Naive thymus-derived CD4-positive, alpha-beta T cell (primary cell): ENCODE measurements at regions of chr16 and their contacts with region 1.

Region 1: GRCh38 chr16:67841764-67842508 is at the start of gene THAP11:
- DNase-seq: peak; percentile 91 to 99 (median 96)
- ATAC-seq: peak; percentile 76
- H3K4me3 ChIP-seq: peak within 1 kb of the TSS; percentile 100
- H3K4me3 Mint-ChIP-seq: peak within 1 kb of the TSS; percentile 94 to 97 (median 96)
- H3K27ac ChIP-seq: peak within 1 kb of the TSS; percentile 99
- H3K27ac Mint-ChIP-seq: peak within 1 kb of the TSS; percentile 94 to 98 (median 97)
- H3K4me1 ChIP-seq: peaks cover 34 to 36% of the 10 kb centered on the region in 2 donors
- H3K4me1 Mint-ChIP-seq: peaks cover 18 to 41% (median 36%) of the 10 kb centered on the region in 7 donors
- H3K27me3 ChIP-seq: no peaks in the 10 kb centered on the region
- H3K27me3 Mint-ChIP-seq: no peaks in the 10 kb centered on the region
- total RNA-seq, gene THAP11: 29.0 to 62.7 (median 44.6) TPM

Region 2: GRCh38 chr16:67660564-67661028 is 181.3 kb before region 1 on chr16 and contains the start of gene PARD6A:
- CTCF ChIA-PET with region 1: no interaction called
- POLR2A ChIA-PET with region 1: interaction called, 3 read pairs
- intact Hi-C with region 1: loop called (anchors 1 to 10 kb)
- DNase-seq: peak; percentile 81 to 95 (median 93)
- ATAC-seq: peak; percentile 89
- H3K4me3 ChIP-seq: peak within 1 kb of the TSS; percentile 99
- H3K4me3 Mint-ChIP-seq: peak within 1 kb of the TSS; percentile 90 to 97 (median 94)
- H3K27ac ChIP-seq: peak within 1 kb of the TSS; percentile 97
- H3K27ac Mint-ChIP-seq: peak within 1 kb of the TSS; percentile 84 to 98 (median 97)
- H3K4me1 ChIP-seq: peaks cover 11 to 17% of the 10 kb centered on the region in 2 donors
- H3K4me1 Mint-ChIP-seq: peaks cover 15 to 40% (median 22%) of the 10 kb centered on the region in 7 donors
- H3K27me3 ChIP-seq: no peaks in the 10 kb centered on the region
- H3K27me3 Mint-ChIP-seq: no peaks in the 10 kb centered on the region
- total RNA-seq, gene PARD6A: 4.5 to 11.2 (median 4.7) TPM

Region 3: GRCh38 chr16:67865316-67865715 is 23.4 kb after region 1 on chr16:
- CTCF ChIA-PET with region 1: interaction called, 6 read pairs
- POLR2A ChIA-PET with region 1: interaction called, 5 read pairs
- intact Hi-C with region 1: loop called in 1 of 2 experiments (anchors 2 kb)
- DNase-seq: peak in 2 of 9 donors; percentile 18 to 19
- ATAC-seq: peak; percentile 64
- H3K4me3 ChIP-seq: no peak overlapping the region
- H3K4me3 Mint-ChIP-seq: no peak overlapping the region
- H3K27ac ChIP-seq: no peak overlapping the region
- H3K27ac Mint-ChIP-seq: peak overlapping the region in 1 of 9 donors; percentile 65
- H3K4me1 ChIP-seq: no peaks in the 10 kb centered on the region
- H3K4me1 Mint-ChIP-seq: peaks cover 4 to 16% (median 8%) of the 10 kb centered on the region in 7 donors
- H3K27me3 ChIP-seq: no peaks in the 10 kb centered on the region
- H3K27me3 Mint-ChIP-seq: no peaks in the 10 kb centered on the region

Region 4: DNA sequence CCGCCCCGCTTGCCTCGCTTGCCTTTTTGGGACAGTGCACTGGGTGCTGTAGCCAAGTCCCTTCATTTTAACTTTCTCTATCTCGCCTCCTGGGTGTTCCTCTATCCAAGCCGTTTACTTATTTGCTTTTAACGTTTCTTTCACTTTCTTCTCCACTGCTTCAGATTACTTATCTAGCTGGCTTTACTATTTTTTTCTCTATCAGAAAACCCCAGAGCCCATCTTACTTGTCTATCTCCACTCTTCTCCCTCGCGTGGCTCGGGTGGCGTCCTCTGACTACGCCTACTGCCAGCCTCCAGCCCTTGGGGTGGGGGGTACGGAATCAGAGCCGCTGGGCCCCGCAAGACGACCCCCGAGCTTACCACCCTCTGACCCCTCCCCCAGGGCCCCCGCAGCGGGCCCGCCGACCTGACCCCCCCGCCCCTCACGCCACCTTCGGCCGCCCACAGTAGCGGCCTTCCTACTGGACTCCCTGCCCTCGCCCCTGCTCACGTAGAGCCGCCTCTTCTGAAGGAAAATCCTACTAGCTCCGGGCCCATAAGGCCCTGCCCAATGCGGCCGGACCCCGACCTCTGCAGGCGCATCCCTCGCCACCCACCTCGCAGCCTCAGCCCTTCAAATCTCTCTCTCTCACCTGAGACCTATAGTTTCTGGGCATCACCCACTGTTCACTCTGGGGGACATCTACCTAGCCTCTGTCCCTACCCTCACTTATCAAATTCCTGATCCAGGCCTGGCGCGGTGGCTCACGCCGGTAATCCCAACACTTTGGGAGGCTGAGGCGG is 127.5 kb after region 1 on chr16:
- CTCF ChIA-PET with region 1: no interaction called
- POLR2A ChIA-PET with region 1: no interaction called
- intact Hi-C with region 1: no loop called
- DNase-seq: peak in 5 of 9 donors; percentile 15 to 44 (median 43)
- ATAC-seq: peak; percentile 21
- H3K4me3 ChIP-seq: peak overlapping the region; percentile 88
- H3K4me3 Mint-ChIP-seq: peak overlapping the region; percentile 86 to 100 (median 96)
- H3K27ac ChIP-seq: peak overlapping the region; percentile 81
- H3K27ac Mint-ChIP-seq: peak overlapping the region; percentile 77 to 93 (median 91)
- H3K4me1 ChIP-seq: peaks cover 10 to 14% of the 10 kb centered on the region in 2 donors
- H3K4me1 Mint-ChIP-seq: peaks cover 20 to 39% (median 29%) of the 10 kb centered on the region in 7 donors
- H3K27me3 ChIP-seq: no peaks in the 10 kb centered on the region
- H3K27me3 Mint-ChIP-seq: peaks cover 0 to 1% (median 0%) of the 10 kb centered on the region in 5 donors

Region 5: DNA sequence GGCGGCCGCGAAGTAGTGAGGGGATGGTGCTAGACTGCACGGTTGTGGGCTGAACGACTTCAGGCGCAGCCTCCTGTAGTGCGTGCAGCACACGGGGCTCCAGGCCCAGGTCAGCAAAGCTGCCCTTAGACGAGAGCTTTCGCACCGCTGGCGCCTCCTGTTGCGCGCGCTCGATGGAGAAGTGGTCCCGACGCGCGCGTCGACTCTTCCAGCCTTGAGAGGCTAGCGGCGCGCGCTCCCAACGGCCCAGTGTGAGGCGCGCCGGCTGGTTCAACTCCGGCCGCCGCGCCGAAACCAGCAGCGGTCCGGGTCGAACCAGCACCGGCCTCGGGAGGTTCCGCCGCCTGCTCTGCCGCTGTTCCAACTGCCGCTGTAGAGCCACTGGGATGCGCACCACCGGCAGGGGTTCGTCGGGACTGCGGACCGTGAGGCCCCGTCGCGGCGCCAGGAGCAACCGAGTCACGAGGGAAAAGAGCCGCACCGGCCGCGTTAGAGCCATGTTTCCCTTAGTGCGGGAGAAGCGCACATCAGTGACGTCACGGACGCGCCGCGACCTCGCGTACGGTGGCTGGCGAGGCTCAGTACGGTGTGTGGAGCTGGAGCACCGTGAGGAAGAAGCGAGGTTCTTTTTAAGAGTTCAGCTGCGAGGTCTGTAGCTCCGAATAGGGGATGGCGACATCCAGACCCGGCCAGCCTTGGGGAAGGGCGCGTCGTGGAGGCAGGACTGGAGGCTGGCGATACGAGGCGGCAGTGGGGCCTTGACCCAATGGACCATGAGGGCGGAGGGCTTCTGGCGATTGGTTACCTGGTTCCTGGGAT is 181.0 kb after region 1 on chr16 and contains the starts of genes DDX28 and DUS2:
- CTCF ChIA-PET with region 1: interaction called, 3 read pairs
- POLR2A ChIA-PET with region 1: interaction called, 5 read pairs
- intact Hi-C with region 1: loop called in 1 of 2 experiments (anchors 2 kb)
- DNase-seq: peak; percentile 89 to 98 (median 94)
- ATAC-seq: peak; percentile 98
- H3K4me3 ChIP-seq: peak within 1 kb of the TSS; percentile 67
- H3K4me3 Mint-ChIP-seq: peak within 1 kb of the TSS; percentile 88 to 100 (median 98)
- H3K27ac ChIP-seq: peak within 1 kb of the TSS; percentile 92
- H3K27ac Mint-ChIP-seq: peak within 1 kb of the TSS; percentile 94 to 100 (median 96)
- H3K4me1 ChIP-seq: peaks cover 16 to 22% of the 10 kb centered on the region in 2 donors
- H3K4me1 Mint-ChIP-seq: peaks cover 13 to 42% (median 30%) of the 10 kb centered on the region in 7 donors
- H3K27me3 ChIP-seq: no peaks in the 10 kb centered on the region
- H3K27me3 Mint-ChIP-seq: peaks cover 0 to 2% (median 0%) of the 10 kb centered on the region in 5 donors
- total RNA-seq, gene DDX28: 15.5 to 19.9 (median 19.1) TPM
- total RNA-seq, gene DUS2: 13.6 to 25.9 (median 18.3) TPM